Activated CD8-positive, alpha-beta T cell treated with anti-CD3 and anti-CD28 coated beads for 36 hours (primary cell): ENCODE measurements at regions of chr15 and their contacts with region 1.

Region 1: GRCh38 chr15:36883713-36884517 is 216.4 kb downstream of the MEIS2 start:
- DNase-seq: peak; percentile 85
- ATAC-seq: peak; percentile 66
- H3K4me3 Mint-ChIP-seq: no peak overlapping the region
- H3K27ac Mint-ChIP-seq: no peak overlapping the region
- H3K4me1 Mint-ChIP-seq: peaks cover 21% of the 10 kb centered on the region
- H3K27me3 Mint-ChIP-seq: peaks cover 91% of the 10 kb centered on the region
- CTCF ChIP-seq: peak; percentile 69

Region 2: DNA sequence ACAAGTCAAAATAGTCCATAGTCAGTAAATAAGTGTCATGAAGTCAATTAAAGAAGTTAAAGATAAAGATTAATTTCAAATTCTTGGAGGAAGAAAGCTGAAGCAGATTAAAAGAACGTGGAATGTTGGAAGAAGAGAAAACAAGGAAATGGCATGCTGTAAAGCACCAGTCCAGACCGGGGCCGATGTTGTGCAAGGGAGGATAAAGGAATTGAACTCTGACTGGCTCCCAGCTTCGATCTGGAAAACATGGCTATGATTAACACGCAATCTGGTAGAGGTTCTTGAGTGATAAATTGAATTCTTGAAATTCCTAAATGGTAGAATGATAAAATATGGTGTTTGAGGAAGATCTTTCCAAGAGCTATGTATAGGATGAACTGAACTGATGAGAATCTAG is 22.0 kb after region 1 on chr15:
- CTCF ChIA-PET with region 1: no interaction called
- POLR2A ChIA-PET with region 1: no interaction called
- intact Hi-C with region 1: no loop called
- DNase-seq: no peak
- ATAC-seq: no peak
- H3K4me3 Mint-ChIP-seq: no peak overlapping the region
- H3K27ac Mint-ChIP-seq: no peak overlapping the region
- H3K4me1 Mint-ChIP-seq: no peaks in the 10 kb centered on the region
- H3K27me3 Mint-ChIP-seq: peaks cover 2% of the 10 kb centered on the region
- CTCF ChIP-seq: no peak

Region 3: DNA sequence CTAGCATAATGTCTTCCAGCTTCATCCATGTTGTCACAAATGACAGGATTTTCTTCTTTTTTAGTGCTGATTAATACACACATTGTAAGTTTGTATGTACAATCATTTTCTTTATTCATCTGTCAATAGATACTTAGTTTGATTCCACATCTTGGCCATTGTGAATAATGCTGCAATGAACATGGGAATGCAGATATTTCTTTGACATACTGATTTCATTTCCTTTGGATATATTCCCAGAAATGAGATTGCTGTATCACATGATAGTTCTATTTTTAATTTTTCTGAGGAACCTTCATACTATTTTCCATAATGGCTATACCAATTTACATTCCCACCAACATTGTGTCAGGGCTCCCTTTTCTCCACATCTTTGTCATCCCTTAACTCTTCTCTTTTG is 98.5 kb after region 1 on chr15:
- CTCF ChIA-PET with region 1: no interaction called
- POLR2A ChIA-PET with region 1: no interaction called
- intact Hi-C with region 1: no loop called
- DNase-seq: no peak
- ATAC-seq: no peak
- H3K4me3 Mint-ChIP-seq: no peak overlapping the region
- H3K27ac Mint-ChIP-seq: no peak overlapping the region
- H3K4me1 Mint-ChIP-seq: no peaks in the 10 kb centered on the region
- H3K27me3 Mint-ChIP-seq: no peaks in the 10 kb centered on the region
- CTCF ChIP-seq: no peak

Region 4: DNA sequence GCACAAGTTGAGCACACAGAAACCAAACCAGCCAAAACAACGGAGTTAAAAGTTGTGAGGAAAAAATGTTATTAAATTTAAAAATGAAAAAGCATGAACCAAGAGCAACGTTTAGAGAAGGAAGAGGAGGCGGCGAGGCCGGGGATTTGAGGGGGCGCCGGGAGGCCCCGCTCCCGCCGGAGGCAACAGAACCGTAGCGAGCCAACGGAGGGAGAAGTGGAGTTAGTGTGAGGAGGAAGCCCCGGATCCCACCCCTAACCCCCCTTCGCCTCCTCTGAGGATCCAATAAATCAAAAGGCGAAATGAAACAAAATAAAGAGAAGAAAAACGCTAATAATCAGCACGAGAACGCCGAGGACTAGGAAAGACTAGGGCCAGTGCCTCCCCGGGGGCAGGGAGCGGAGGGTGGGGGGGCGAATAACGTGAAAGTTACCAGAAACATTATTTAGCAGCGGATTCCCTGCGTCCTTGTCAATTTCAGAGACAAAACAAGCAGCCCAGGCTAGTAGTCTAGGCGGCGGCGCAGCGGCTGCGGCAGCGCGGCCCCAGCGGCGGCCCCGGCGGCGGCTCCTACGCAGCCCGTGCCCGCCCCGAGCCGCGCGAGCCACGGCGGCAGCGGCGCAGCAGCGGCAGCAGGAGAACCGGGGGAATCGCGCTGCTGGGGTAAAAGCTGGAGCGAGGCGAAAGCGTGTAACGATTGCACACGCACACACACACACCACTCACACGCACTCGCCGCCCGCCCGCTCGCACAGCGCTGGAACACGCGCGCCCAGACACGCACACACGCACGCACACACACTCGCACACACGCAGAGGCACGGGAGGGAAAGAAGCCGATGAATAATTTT is 214.8 kb after region 1 on chr15:
- CTCF ChIA-PET with region 1: interaction called, 3 read pairs
- POLR2A ChIA-PET with region 1: no interaction called
- intact Hi-C with region 1: loop called (anchors 5 kb)
- DNase-seq: peak; percentile 23
- ATAC-seq: peak; percentile 69
- H3K4me3 Mint-ChIP-seq: peak overlapping the region; percentile 76
- H3K27ac Mint-ChIP-seq: no peak overlapping the region
- H3K4me1 Mint-ChIP-seq: peaks cover 42% of the 10 kb centered on the region
- H3K27me3 Mint-ChIP-seq: peaks cover 78% of the 10 kb centered on the region
- CTCF ChIP-seq: no peak